ENCODE measurements at regions of chr5 and their contacts with region 1.

Region 1: GRCh38 chr5:102971697-102972293 is 148.1 kb downstream of the GIN1 start:
- DNase-seq: no peak
- H3K4me3 ChIP-seq: no peak overlapping the region
- H3K27ac ChIP-seq: no peak overlapping the region
- H3K4me1 ChIP-seq: no peaks in the 10 kb centered on the region
- H3K27me3 ChIP-seq: no peaks in the 10 kb centered on the region
- CTCF ChIP-seq: peak in 3 of 4 experiments; percentile 37 to 48 (median 43)
- EP300 ChIP-seq: no peak
- POLR2A ChIP-seq: no peak

Region 2: GRCh38 chr5:102681407-102681983 is 290.3 kb before region 1 on chr5:
- intact Hi-C with region 1: loop called (anchors 5 kb)
- DNase-seq: peak; percentile 68
- H3K4me3 ChIP-seq: no peak overlapping the region
- H3K27ac ChIP-seq: no peak overlapping the region
- H3K4me1 ChIP-seq: peaks cover 0 to 4% (median 0%) of the 10 kb centered on the region in 4 donors
- H3K27me3 ChIP-seq: no peaks in the 10 kb centered on the region
- CTCF ChIP-seq: peak; percentile 7 to 56 (median 52)
- EP300 ChIP-seq: no peak
- POLR2A ChIP-seq: no peak

Region 3: DNA sequence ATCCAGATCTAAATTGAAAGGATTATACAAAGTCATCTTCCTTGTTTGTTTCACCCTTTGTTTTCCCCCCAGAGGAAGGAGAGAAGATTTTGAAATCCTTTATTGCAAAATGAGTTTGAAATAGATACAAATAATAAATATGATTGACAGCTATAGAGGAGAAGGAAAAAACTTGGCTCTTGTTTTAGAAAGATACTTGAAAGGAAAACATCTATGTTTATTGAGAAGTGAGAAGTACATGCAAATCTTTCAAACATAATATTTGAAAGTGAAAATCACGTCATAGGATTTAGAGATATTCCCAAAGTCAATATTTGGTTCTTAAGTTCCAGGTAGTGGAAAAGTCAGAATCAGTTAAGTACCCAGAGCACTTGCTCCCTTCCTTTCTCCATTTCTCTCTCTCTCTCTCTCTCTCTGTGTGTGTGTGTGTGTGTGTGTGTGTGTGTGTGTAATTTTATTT is 189.5 kb before region 1 on chr5:
- intact Hi-C with region 1: loop called (anchors 5 kb)
- DNase-seq: no peak
- H3K4me3 ChIP-seq: no peak overlapping the region
- H3K27ac ChIP-seq: no peak overlapping the region
- H3K4me1 ChIP-seq: peaks cover 0 to 47% (median 35%) of the 10 kb centered on the region in 4 donors
- H3K27me3 ChIP-seq: no peaks in the 10 kb centered on the region
- CTCF ChIP-seq: no peak
- EP300 ChIP-seq: no peak
- POLR2A ChIP-seq: no peak